PC-9 (cell line): ENCODE measurements at regions of chr6 and their contacts with region 1.

Region 1: GRCh38 chr6:139369568-139370282 is 4.7 kb downstream of the CITED2 start:
- DNase-seq: peak; percentile 9 to 70
- H3K4me3 ChIP-seq: peak overlapping the region; percentile 89; the same call in 1 of the 2 replicates
- H3K27ac ChIP-seq: peak overlapping the region; percentile 28
- H3K4me1 ChIP-seq: peaks cover 36% of the 10 kb centered on the region
- H3K27me3 ChIP-seq: no peaks in the 10 kb centered on the region
- CTCF ChIP-seq: peak; percentile 96

Region 2: GRCh38 chr6:139490482-139490881 is 120.8 kb after region 1 on chr6:
- CTCF ChIA-PET with region 1: no interaction called
- POLR2A ChIA-PET with region 1: no interaction called
- intact Hi-C with region 1: no loop called
- DNase-seq: no peak
- H3K4me3 ChIP-seq: no peak overlapping the region
- H3K27ac ChIP-seq: no peak overlapping the region
- H3K4me1 ChIP-seq: no peaks in the 10 kb centered on the region
- H3K27me3 ChIP-seq: no peaks in the 10 kb centered on the region
- CTCF ChIP-seq: no peak

Region 3: DNA sequence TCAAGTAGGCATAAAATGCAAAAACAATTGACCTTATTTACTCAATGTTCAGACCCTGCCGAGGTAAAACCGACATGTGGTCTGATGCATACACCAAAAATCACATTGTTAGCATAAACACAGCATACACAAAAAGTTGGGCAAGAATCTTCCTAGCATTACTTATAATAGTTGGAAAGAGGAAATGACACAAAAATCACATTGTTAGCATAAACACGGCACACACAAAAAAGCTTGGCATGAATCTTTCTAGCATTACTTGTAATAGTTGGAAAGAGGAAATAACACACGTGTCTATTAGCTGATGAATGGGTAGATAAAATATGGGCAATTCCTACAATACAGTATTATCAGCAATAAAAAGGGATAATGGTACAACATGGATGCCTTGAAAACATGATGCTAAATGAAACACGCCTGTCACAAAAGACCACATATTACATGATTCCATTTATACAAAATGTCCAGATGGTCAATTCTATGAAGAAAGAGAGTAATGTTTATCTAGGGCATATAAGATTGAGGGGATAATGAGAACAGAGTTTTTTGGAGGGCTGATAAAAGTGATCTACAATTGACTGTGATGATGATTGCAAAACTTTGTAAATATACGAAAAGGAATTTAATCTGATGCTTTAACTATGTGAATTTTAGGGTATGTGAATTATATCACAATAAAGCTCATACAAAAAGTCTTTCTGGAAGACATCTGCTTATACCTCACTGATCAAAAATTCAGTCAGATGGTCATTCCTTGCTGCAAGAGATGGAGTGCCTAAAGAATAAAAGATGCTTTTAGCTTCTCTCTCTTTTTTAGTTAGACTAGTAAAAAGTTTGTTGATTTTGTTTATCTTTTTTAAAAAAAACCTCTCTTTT is 1024.2 kb after region 1 on chr6:
- CTCF ChIA-PET with region 1: no interaction called
- POLR2A ChIA-PET with region 1: interaction called, 11 read pairs
- intact Hi-C with region 1: no loop called
- DNase-seq: no peak
- H3K4me3 ChIP-seq: no peak overlapping the region
- H3K27ac ChIP-seq: no peak overlapping the region
- H3K4me1 ChIP-seq: no peaks in the 10 kb centered on the region
- H3K27me3 ChIP-seq: no peaks in the 10 kb centered on the region
- CTCF ChIP-seq: no peak